ENCODE measurements at regions of chr9 and their contacts with region 1.

Region 1: DNA sequence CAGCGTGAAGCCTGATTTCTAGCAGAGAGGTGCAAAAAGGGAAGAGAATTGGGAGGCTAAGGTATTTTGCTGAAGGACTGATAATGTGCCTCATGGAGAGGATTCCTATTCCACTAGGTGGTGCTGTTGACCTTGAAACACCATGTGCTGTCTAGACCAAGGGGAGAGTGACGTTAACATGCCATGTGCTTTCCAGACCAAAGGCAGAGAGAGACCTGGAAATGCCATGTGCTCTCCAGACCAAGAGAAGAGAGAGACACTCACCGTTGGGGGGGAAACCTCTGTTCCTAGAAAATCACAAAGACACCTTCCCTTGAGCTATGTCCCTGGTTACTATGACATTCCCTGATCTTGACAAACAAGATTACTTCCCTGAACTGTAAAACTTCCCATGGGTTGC is 286.0 kb upstream of the TUSC1 start:
- DNase-seq: peak; percentile 70
- H3K4me3 ChIP-seq: no peak overlapping the region
- H3K27ac ChIP-seq: no peak overlapping the region
- H3K4me1 ChIP-seq: no peaks in the 10 kb centered on the region
- H3K27me3 ChIP-seq: no peaks in the 10 kb centered on the region
- CTCF ChIP-seq: peak; percentile 53 to 57
- POLR2A ChIP-seq: no peak

Region 2: GRCh38 chr9:26033336-26033735 is 69.1 kb after region 1 on chr9:
- CTCF ChIA-PET with region 1: no interaction called
- POLR2A ChIA-PET with region 1: no interaction called
- dilution Hi-C with region 1: no loop called
- intact Hi-C with region 1: no loop called
- DNase-seq: no peak
- H3K4me3 ChIP-seq: no peak overlapping the region
- H3K27ac ChIP-seq: no peak overlapping the region
- H3K4me1 ChIP-seq: no peaks in the 10 kb centered on the region
- H3K27me3 ChIP-seq: no peaks in the 10 kb centered on the region
- CTCF ChIP-seq: no peak
- POLR2A ChIP-seq: no peak

Region 3: GRCh38 chr9:26612211-26612610 is 648.0 kb after region 1 on chr9:
- CTCF ChIA-PET with region 1: interaction called, 4 read pairs
- POLR2A ChIA-PET with region 1: no interaction called
- dilution Hi-C with region 1: no loop called
- intact Hi-C with region 1: loop called (anchors 1 kb)
- DNase-seq: no peak
- H3K4me3 ChIP-seq: no peak overlapping the region
- H3K27ac ChIP-seq: no peak overlapping the region
- H3K4me1 ChIP-seq: no peaks in the 10 kb centered on the region
- H3K27me3 ChIP-seq: no peaks in the 10 kb centered on the region
- CTCF ChIP-seq: no peak
- POLR2A ChIP-seq: no peak

Region 4: DNA sequence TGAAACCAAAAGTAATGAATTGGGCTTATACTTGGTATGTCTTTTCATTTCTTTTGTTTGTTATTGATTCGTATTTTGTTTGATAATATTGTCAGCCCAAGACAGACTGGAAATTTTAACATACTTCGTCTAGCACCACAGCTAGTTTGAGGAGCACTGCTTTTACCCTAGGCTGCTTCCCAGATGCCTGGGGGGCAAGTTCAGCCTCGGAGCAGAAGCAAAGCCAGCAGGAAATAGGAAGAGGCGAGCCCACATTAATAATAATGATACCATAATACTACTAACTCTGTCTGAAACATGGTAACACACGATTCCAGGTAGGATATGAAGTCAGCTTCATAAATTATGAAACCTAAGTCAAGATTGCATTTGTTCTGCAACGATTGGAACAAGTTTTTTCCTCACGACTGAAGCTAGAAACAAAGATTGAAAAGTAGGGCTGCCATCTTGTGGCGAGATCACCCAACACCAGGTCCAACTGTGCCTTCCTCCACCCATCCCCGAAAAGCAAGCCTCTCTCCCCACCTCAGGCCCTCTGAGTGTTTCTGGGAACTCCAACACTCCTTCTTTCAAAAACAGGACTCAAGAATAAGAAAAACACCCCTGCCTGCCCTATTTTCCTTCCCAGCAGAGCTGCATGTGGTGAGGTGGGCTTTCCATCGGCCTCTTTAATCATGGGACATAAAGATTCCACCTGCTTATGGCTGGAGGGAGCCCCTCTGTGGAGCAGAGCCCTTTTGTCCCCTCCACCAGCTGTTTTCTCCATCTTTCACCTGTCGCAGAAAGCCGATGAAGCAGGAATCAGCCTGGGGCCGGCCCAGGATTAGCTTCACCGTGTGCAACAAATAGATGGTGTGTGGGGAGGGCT is 692.0 kb after region 1 on chr9:
- CTCF ChIA-PET with region 1: interaction called, 12 read pairs
- POLR2A ChIA-PET with region 1: no interaction called
- dilution Hi-C with region 1: no loop called
- intact Hi-C with region 1: loop called (anchors 1 kb)
- DNase-seq: peak; percentile 10
- H3K4me3 ChIP-seq: no peak overlapping the region
- H3K27ac ChIP-seq: no peak overlapping the region
- H3K4me1 ChIP-seq: no peaks in the 10 kb centered on the region
- H3K27me3 ChIP-seq: no peaks in the 10 kb centered on the region
- CTCF ChIP-seq: peak; percentile 9 to 22
- POLR2A ChIP-seq: no peak

Region 5: DNA sequence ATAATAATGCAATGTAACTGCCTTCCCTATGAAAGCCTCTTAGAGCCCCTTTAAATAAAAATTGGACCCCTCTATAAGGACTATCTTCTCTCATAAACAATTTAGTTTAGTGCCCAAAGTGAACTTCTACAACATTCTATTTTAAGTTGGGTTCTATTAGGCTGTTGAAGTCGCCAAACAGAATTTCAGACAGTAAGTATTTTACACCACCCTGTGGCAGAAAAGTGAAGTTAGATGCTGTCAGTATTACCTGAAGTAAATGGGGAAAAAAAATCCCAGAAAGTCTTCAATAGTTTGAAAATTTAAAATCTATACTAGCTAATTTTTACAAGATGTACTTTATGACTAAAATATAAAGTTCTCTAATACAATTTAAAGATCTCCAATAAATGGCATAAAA is 898.8 kb after region 1 on chr9:
- CTCF ChIA-PET with region 1: no interaction called
- POLR2A ChIA-PET with region 1: no interaction called
- dilution Hi-C with region 1: no loop called
- intact Hi-C with region 1: loop called (anchors 5 kb)
- DNase-seq: no peak
- H3K4me3 ChIP-seq: no peak overlapping the region
- H3K27ac ChIP-seq: no peak overlapping the region
- H3K4me1 ChIP-seq: no peaks in the 10 kb centered on the region
- H3K27me3 ChIP-seq: no peaks in the 10 kb centered on the region
- CTCF ChIP-seq: no peak
- POLR2A ChIP-seq: no peak

Measured in endothelial cell of umbilical vein (primary cell).